ENCODE measurements at regions of chr1 and their contacts with region 1.

Region 1: DNA sequence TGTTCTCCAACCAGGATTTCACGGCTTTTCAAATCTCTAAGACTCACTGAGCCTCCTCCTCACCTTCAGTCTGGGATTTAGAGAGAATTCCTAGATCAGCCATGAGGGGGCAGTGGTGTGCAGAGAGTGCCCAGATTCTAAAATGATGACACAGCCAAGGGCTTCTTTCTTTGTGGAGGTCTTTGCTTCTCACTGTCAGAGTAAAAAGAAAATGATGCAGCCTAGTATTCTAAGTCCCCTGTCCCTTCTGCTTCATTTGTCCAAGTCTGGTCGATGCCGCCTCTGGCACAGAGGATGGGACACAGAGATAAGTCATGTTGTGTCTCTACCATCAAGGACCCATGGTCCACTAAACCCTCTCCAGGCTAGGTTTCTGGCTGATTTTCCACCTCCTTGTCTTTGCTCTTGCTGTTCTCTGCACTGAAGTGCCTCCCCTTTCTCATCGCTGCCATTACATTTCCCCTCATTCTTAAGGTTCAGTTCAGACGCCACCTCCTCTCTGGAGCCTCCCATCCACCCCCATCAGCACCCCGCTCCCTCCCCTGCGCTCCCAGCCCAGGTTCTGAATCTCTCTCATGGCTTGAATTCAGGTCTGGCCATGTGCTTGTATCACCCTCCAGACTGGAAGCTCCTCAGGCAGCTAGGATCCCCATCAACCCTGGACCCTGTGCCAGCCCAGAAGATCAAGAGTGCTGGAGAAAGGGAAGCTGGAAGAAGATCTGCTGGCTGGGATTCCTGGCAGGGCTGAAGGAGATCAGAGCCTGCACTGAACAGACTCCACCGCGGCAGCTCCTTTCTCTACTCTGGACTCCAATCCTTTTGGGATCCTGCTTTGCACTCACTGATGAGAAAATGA is 12.0 kb upstream of the TINAGL1 start:
- DNase-seq: peak; percentile 72
- H3K4me3 Mint-ChIP-seq: no peak overlapping the region
- H3K27ac Mint-ChIP-seq: no peak overlapping the region
- H3K4me1 Mint-ChIP-seq: no peaks in the 10 kb centered on the region
- H3K27me3 Mint-ChIP-seq: no peaks in the 10 kb centered on the region
- CTCF ChIP-seq: peak; percentile 92

Region 2: DNA sequence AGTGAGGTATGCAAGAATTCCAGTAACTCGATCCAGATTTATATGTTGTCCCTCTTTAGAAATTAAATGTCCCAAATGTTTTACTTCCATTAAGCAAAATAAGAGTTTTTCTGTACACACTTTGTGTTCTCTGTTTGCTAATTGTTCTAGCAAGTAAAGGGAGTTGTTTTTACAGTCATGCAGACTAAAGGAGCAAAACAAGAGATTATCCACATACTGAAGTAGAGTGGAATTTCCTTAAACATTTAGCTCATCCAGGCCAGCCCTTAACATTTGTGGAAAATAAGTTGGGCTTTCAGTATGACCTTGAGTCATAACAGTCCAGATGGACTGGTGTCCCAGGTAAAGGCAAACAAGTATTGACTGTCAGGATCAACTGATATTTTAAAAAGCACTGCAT is 32.2 kb before region 1 on chr1:
- CTCF ChIA-PET with region 1: no interaction called
- POLR2A ChIA-PET with region 1: no interaction called
- intact Hi-C with region 1: no loop called
- DNase-seq: no peak
- H3K4me3 Mint-ChIP-seq: no peak overlapping the region
- H3K27ac Mint-ChIP-seq: no peak overlapping the region
- H3K4me1 Mint-ChIP-seq: peaks cover 10% of the 10 kb centered on the region
- H3K27me3 Mint-ChIP-seq: no peaks in the 10 kb centered on the region
- CTCF ChIP-seq: no peak

Region 3: GRCh38 chr1:31605908-31606427 is 41.6 kb after region 1 on chr1:
- CTCF ChIA-PET with region 1: interaction called, 13 read pairs
- POLR2A ChIA-PET with region 1: no interaction called
- intact Hi-C with region 1: no loop called
- DNase-seq: peak; percentile 33
- H3K4me3 Mint-ChIP-seq: no peak overlapping the region
- H3K27ac Mint-ChIP-seq: no peak overlapping the region
- H3K4me1 Mint-ChIP-seq: no peaks in the 10 kb centered on the region
- H3K27me3 Mint-ChIP-seq: no peaks in the 10 kb centered on the region
- CTCF ChIP-seq: no peak